ENCODE measurements at regions of chr2 and their contacts with region 1.

Region 1: GRCh38 chr2:169573160-169573973 is at the start of gene FASTKD1:
- DNase-seq: peak; percentile 71
- ATAC-seq: peak; percentile 99
- H3K4me3 Mint-ChIP-seq: peak within 1 kb of the TSS; percentile 98
- H3K27ac Mint-ChIP-seq: peak within 1 kb of the TSS; percentile 81
- H3K4me1 Mint-ChIP-seq: peaks cover 10% of the 10 kb centered on the region
- H3K27me3 Mint-ChIP-seq: no peaks in the 10 kb centered on the region
- CTCF ChIP-seq: no peak
- total RNA-seq, gene FASTKD1: 23.5 and 27.1 TPM in 2 replicates

Region 2: DNA sequence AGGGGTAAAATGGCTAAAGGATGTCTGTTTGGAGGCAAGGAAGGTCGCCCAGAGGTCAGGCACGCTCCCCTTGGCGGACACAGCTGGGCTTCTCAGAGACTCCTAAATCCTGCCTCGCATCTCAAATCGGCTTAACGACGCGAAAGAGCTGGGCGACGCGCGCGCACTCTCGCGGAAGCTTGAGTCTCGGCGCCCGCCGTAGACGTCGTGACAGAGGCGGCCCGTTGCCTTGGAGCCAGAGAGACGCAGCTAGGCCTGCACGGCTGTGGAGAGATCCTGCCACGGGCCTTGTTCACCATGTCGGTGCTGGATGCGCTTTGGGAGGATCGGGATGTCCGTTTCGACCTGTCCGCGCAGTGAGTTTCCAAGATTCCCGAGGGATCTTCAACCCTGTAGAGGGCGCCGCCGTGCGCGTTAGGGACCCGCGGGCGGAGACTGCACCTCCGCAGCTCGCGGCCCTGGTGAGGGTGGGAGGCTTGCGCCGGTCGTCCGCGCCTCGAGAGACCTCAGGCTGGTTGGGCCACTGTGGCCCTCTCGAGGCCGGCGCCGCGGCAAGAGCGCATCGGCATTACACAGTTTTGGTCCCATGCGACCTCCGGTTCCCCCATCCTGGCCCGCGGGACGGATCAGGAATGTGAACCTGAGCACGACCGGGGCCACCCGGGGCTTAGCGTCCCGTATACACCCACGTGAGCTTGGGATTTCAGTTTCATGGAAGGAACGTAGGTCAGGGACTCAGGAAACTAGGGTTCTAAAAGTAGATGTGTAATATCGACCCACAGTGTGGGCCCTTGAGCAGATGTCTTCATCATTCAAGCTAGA is 93.9 kb before region 1 on chr2 and contains the start of gene BBS5:
- CTCF ChIA-PET with region 1: no interaction called
- POLR2A ChIA-PET with region 1: no interaction called
- intact Hi-C with region 1: loop called (anchors 5 kb)
- DNase-seq: peak; percentile 55
- ATAC-seq: peak; percentile 95
- H3K4me3 Mint-ChIP-seq: peak within 1 kb of the TSS; percentile 91
- H3K27ac Mint-ChIP-seq: peak within 1 kb of the TSS; percentile 24
- H3K4me1 Mint-ChIP-seq: peaks cover 10% of the 10 kb centered on the region
- H3K27me3 Mint-ChIP-seq: no peaks in the 10 kb centered on the region
- CTCF ChIP-seq: no peak
- total RNA-seq, gene BBS5: 2.3 and 2.8 TPM in 2 replicates

Region 3: GRCh38 chr2:169584005-169584877 is 10.9 kb after region 1 on chr2 and contains the start of gene PPIG:
- CTCF ChIA-PET with region 1: interaction called, 7 read pairs
- POLR2A ChIA-PET with region 1: interaction called, 29 read pairs
- intact Hi-C with region 1: loop called (anchors 1 kb)
- DNase-seq: peak; percentile 75
- ATAC-seq: peak; percentile 89
- H3K4me3 Mint-ChIP-seq: peak within 1 kb of the TSS; percentile 99
- H3K27ac Mint-ChIP-seq: peak within 1 kb of the TSS; percentile 99
- H3K4me1 Mint-ChIP-seq: peaks cover 39% of the 10 kb centered on the region
- H3K27me3 Mint-ChIP-seq: no peaks in the 10 kb centered on the region
- CTCF ChIP-seq: no peak
- total RNA-seq, gene PPIG: 68.0 and 69.8 TPM in 2 replicates

Region 4: GRCh38 chr2:169798718-169799592 is 225.6 kb after region 1 on chr2 and contains the start of gene SSB:
- CTCF ChIA-PET with region 1: no interaction called
- POLR2A ChIA-PET with region 1: interaction called, 3 read pairs
- intact Hi-C with region 1: loop called (anchors 1 kb)
- DNase-seq: peak; percentile 89
- ATAC-seq: peak; percentile 96
- H3K4me3 Mint-ChIP-seq: peak within 1 kb of the TSS; percentile 91
- H3K27ac Mint-ChIP-seq: peak within 1 kb of the TSS; percentile 94
- H3K4me1 Mint-ChIP-seq: peaks cover 22% of the 10 kb centered on the region
- H3K27me3 Mint-ChIP-seq: no peaks in the 10 kb centered on the region
- CTCF ChIP-seq: no peak
- total RNA-seq, gene SSB: 94.7 and 100 TPM in 2 replicates